ENCODE measurements at regions of chr5 and their contacts with region 1.

Region 1: DNA sequence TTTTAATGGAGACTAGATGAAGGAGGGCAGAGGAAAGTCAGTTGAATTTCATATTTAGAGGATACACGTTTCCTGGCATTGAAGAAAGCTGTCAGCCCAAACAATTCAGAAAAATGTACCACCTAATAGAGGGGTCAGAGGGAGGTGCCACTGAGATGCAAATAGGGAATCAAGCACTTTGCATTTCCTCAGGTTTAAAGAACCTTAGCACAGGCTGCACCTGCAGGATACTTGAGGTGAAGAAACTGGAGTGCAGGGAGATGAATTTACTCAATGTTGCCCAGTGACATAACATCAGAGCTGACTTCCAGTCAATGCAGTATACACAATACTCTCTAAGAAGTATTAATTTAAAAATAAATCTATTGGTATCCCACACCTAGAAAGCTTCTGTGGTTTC is 67.0 kb upstream of the MAST4 start:
- DNase-seq: no peak
- H3K4me3 ChIP-seq: no peak overlapping the region
- H3K27ac ChIP-seq: no peak overlapping the region
- H3K4me1 ChIP-seq: no peaks in the 10 kb centered on the region
- CTCF ChIP-seq: no peak

Region 2: GRCh38 chr5:66426259-66427138 is 102.7 kb before region 1 on chr5:
- CTCF ChIA-PET with region 1: no interaction called
- POLR2A ChIA-PET with region 1: interaction called, 10 read pairs
- intact Hi-C with region 1: no loop called
- DNase-seq: no peak
- H3K4me3 ChIP-seq: no peak overlapping the region
- H3K27ac ChIP-seq: no peak overlapping the region
- H3K4me1 ChIP-seq: no peaks in the 10 kb centered on the region
- CTCF ChIP-seq: no peak